Dorsolateral prefrontal cortex (tissue), 120 donors: ENCODE measurements at regions of chr15 and their contacts with region 1.

Region 1: GRCh38 chr15:25850154-25851111 is 12.7 kb downstream of the ATP10A start:
- DNase-seq: no peak
- H3K4me3 ChIP-seq: peak overlapping the region in 55 of 59 donors; percentile 7 to 63 (median 38)
- H3K27ac ChIP-seq: peak overlapping the region in 27 of 59 donors; percentile 1 to 72 (median 40)
- H3K27me3 ChIP-seq: peaks cover 0 to 14% (median 0%) of the 10 kb centered on the region in 45 donors
- CTCF ChIP-seq: no peak

Region 2: GRCh38 chr15:25761971-25762662 is 88.3 kb before region 1 on chr15:
- intact Hi-C with region 1: no loop called
- DNase-seq: no peak
- H3K4me3 ChIP-seq: no peak overlapping the region
- H3K27ac ChIP-seq: no peak overlapping the region
- H3K27me3 ChIP-seq: peaks cover 0 to 5% (median 0%) of the 10 kb centered on the region in 45 donors
- CTCF ChIP-seq: no peak

Region 3: GRCh38 chr15:25933456-25934158 is 83.2 kb after region 1 on chr15:
- intact Hi-C with region 1: loop called in 1 of 2 experiments (anchors 10 kb)
- DNase-seq: peak in 5 of 10 donors; percentile 34 to 67 (median 61)
- H3K4me3 ChIP-seq: peak overlapping the region in 43 of 59 donors; percentile 5 to 57 (median 32)
- H3K27ac ChIP-seq: peak overlapping the region in 3 of 59 donors; percentile 10 to 33 (median 28)
- H3K27me3 ChIP-seq: no peaks in the 10 kb centered on the region
- CTCF ChIP-seq: peak; percentile 32 to 74 (median 59)